Activated CD4-positive, alpha-beta memory T cell treated with anti-CD3 and anti-CD28 coated beads for 36 hours (primary cell): ENCODE measurements at regions of chr10 and their contacts with region 1.

Region 1: DNA sequence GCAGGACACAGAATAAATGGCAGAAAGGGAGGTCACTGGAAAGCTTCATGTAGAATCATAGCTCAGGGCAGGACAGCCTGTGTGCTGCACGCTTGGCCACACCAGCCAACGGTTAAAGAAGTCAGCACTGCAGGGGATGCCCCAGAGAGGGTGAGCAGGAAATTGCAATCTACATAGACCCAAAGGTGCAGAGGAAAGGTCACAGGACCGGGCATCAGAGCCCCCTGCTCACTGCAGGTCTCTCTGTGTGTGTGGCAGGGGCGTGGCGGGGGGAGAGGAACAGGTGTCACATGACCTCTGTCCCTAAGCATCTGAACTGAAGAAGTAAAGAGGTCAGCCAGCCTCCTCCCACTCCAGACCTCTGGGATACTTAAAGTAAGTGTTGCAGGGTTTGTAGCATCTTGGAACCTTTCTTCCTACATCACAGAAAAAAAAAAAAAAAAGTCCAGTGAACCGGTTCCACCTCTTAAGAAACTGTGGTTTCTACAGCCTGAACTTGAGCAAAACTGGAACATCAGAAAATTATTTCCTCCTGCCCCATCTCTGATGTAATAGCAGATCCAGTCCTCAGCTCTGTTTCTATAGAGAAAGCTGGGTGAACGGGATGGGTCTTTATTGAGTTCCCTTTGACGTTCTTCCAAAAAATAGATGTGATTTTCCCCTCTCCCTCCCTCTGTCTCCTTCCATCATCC is 64.3 kb downstream of the RGS10 start:
- DNase-seq: peak; percentile 67
- H3K4me3 Mint-ChIP-seq: peak overlapping the region; percentile 17
- H3K27ac Mint-ChIP-seq: peak overlapping the region; percentile 49
- H3K4me1 Mint-ChIP-seq: peaks cover 33% of the 10 kb centered on the region
- H3K27me3 Mint-ChIP-seq: no peaks in the 10 kb centered on the region

Region 2: GRCh38 chr10:119222537-119222936 is 255.7 kb before region 1 on chr10:
- CTCF ChIA-PET with region 1: no interaction called
- POLR2A ChIA-PET with region 1: no interaction called
- intact Hi-C with region 1: no loop called
- DNase-seq: no peak
- H3K4me3 Mint-ChIP-seq: no peak overlapping the region
- H3K27ac Mint-ChIP-seq: no peak overlapping the region
- H3K4me1 Mint-ChIP-seq: peaks cover 27% of the 10 kb centered on the region
- H3K27me3 Mint-ChIP-seq: no peaks in the 10 kb centered on the region

Region 3: GRCh38 chr10:119461380-119461779 is 16.9 kb before region 1 on chr10:
- CTCF ChIA-PET with region 1: no interaction called
- POLR2A ChIA-PET with region 1: no interaction called
- intact Hi-C with region 1: loop called (anchors 2 kb)
- DNase-seq: peak; percentile 46
- H3K4me3 Mint-ChIP-seq: no peak overlapping the region
- H3K27ac Mint-ChIP-seq: no peak overlapping the region
- H3K4me1 Mint-ChIP-seq: peaks cover 15% of the 10 kb centered on the region
- H3K27me3 Mint-ChIP-seq: no peaks in the 10 kb centered on the region